Endothelial cell of umbilical vein (primary cell): ENCODE measurements at regions of chr22 and their contacts with region 1.

Region 1: GRCh38 chr22:21778705-21779363 is 43.2 kb upstream of the YPEL1 start:
- DNase-seq: no peak
- H3K4me3 ChIP-seq: no peak overlapping the region
- H3K27ac ChIP-seq: no peak overlapping the region
- H3K4me1 ChIP-seq: no peaks in the 10 kb centered on the region
- H3K27me3 ChIP-seq: no peaks in the 10 kb centered on the region
- CTCF ChIP-seq: no peak
- POLR2A ChIP-seq: no peak

Region 2: GRCh38 chr22:21917181-21917958 is 138.5 kb after region 1 on chr22:
- CTCF ChIA-PET with region 1: interaction called, 19 read pairs
- POLR2A ChIA-PET with region 1: no interaction called
- dilution Hi-C with region 1: no loop called
- intact Hi-C with region 1: no loop called
- DNase-seq: no peak
- H3K4me3 ChIP-seq: no peak overlapping the region
- H3K27ac ChIP-seq: no peak overlapping the region
- H3K4me1 ChIP-seq: no peaks in the 10 kb centered on the region
- H3K27me3 ChIP-seq: no peaks in the 10 kb centered on the region
- CTCF ChIP-seq: no peak
- POLR2A ChIP-seq: no peak